ENCODE measurements at regions of chr2 and their contacts with region 1.

Region 1: DNA sequence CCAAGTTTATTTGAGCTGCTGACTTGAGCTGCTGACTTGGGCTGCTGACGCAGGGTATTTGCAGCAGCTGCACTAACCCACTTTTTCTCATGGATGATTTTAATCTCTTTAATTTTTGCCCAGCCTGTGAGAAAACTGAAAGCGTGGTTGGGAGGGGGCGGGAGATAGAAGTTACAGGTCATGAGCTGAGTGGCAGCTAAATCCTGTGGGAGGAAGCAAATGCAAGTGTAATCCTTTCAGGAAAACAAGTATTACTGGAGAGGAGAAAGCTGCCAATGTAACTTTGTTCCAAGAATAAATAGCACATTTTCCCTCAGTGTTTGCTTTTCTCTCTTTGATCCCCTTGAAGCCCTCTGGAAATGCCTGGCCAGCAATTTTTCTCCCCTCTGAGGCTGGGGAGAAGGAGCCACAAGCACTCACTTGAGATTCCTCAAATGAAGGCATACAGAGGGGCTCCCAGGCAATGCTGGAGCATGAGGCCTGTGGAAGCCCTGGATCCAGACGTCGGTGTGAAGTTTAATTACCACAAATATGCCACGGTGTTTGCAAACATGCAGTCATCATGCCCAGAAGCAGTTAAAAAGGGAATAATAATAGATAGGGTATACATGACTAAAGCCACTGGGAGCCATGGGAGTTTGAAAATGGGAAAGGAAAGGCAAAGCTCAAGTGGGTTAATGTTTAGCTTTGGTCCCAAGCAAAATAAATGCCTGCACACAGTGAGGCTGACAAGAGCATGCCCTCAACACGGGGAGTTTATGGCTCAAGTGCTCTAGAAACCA is 10.4 kb upstream of the EVA1A start:
- DNase-seq: peak; percentile 96
- ATAC-seq: peak; percentile 94
- H3K4me3 ChIP-seq: peak overlapping the region; percentile 39 to 54 (median 46)
- H3K27ac ChIP-seq: peak overlapping the region; percentile 95
- H3K4me1 ChIP-seq: peaks cover 75% of the 10 kb centered on the region
- H3K27me3 ChIP-seq: no peaks in the 10 kb centered on the region
- CTCF ChIP-seq: no peak
- EP300 ChIP-seq: peak in 1 of 2 experiments; percentile 95; a peak in 2 of 4 replicates
- POLR2A ChIP-seq: peak; percentile 49 to 82; a peak in 3 of 4 replicates
- RAD21 ChIP-seq: no peak; the same call in 1 of the 2 replicates

Region 2: DNA sequence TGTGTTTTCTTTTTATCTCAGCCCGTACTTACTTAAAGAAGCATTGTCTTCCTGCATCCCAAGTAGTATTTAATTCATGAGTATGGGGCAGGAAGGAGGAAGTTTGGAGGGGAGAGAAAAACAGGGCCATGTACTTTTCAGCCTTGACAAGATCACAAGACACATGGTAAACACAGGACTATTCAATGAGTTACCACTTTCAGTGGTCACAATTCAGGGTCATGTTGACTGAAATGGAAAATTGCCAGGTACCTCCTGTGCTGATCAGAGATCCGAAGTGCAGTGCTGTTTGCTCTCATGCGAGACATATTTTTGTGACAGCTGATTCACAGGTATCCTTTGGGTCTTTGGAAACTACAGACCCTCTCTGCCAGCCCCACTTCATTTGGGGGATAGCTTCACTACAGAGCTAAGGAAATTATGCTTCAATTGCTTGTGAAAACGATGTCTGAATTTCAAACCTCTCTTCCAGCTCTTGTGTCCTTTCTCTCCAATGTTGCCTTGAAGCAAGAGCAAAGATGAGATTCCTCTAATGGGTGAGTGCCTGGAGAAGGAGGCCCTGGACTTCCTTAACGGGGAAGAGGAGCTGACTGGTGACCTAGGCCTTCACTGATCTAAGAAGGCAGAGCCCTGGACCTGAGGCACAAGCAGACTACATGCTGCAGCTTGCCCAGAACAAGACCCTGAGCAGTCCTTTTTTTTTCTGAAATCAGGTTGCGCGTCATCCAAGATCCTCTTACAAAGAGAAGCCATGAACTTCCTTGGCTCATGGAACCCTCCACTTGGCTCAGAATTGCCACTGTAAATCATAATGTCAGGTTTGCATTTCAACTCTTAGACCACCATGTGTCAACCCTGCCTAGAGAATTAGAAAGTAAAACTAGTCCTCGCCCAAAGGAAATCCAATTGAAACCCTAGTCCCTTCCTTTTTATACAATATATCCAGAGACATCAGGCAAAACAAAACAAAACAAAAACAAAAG is 54.5 kb before region 1 on chr2:
- CTCF ChIA-PET with region 1: no interaction called
- POLR2A ChIA-PET with region 1: interaction called, 58 read pairs
- in situ Hi-C with region 1: loop called (anchors 5 kb)
- intact Hi-C with region 1: no loop called
- DNase-seq: peak; percentile 99
- ATAC-seq: peak; percentile 93
- H3K4me3 ChIP-seq: peak overlapping the region in 1 of 3 experiments; percentile 24; a peak in 1 of 6 replicates
- H3K27ac ChIP-seq: peak overlapping the region; percentile 92
- H3K4me1 ChIP-seq: peaks cover 84% of the 10 kb centered on the region
- H3K27me3 ChIP-seq: no peaks in the 10 kb centered on the region
- CTCF ChIP-seq: no peak
- EP300 ChIP-seq: peak; percentile 84 to 100; a peak in 3 of 4 replicates
- POLR2A ChIP-seq: peak; percentile 23 to 36; a peak in 1 of 4 replicates
- RAD21 ChIP-seq: no peak; the same call in 1 of the 2 replicates

Region 3: GRCh38 chr2:75548036-75548573 is 23.0 kb before region 1 on chr2:
- CTCF ChIA-PET with region 1: no interaction called
- POLR2A ChIA-PET with region 1: interaction called, 18 read pairs
- in situ Hi-C with region 1: no loop called
- intact Hi-C with region 1: loop called (anchors 1 kb)
- DNase-seq: no peak
- ATAC-seq: no peak
- H3K4me3 ChIP-seq: no peak overlapping the region
- H3K27ac ChIP-seq: no peak overlapping the region
- H3K4me1 ChIP-seq: peaks cover 97% of the 10 kb centered on the region
- H3K27me3 ChIP-seq: no peaks in the 10 kb centered on the region
- CTCF ChIP-seq: no peak
- EP300 ChIP-seq: no peak
- POLR2A ChIP-seq: 0 out of 4 replicates have a peak, but pooled peaks of 1 of the 2 experiments have one; percentile 6
- RAD21 ChIP-seq: no peak

Region 4: DNA sequence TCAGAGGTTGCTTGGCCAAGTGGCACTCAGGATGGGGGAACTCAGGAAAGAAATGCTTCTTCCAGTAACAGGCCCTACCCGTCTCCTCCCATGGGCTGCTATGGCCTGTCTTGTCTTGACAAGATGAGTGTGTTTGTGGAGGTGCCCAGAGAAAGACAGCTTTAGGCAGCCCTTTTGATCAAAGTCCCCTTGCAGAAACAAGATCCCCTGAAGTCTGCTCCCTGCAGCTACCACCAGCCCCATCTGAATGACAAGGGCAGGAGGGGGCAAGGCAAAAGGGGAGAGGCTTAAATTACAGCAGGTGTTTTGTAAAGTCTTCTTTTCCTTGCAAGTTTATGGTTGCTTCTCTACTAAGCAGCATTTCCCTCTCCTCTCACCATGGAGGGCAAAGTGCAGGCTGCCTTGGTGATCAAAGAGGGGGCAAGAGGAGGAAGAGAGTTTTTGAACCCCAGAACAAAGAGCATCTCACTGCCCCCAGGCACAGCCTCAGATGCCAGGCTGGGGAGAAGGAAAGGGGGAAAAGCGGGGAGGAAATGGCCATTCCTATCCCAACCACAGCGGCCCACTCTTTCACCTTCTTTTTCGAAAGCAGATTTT is 17.1 kb before region 1 on chr2:
- CTCF ChIA-PET with region 1: no interaction called
- POLR2A ChIA-PET with region 1: interaction called, 126 read pairs
- in situ Hi-C with region 1: no loop called
- intact Hi-C with region 1: no loop called
- DNase-seq: no peak
- ATAC-seq: no peak
- H3K4me3 ChIP-seq: 0 out of 6 replicates have a peak overlapping the region, but pooled peaks of 1 of the 3 experiments have one; percentile 4
- H3K27ac ChIP-seq: peak overlapping the region; percentile 27
- H3K4me1 ChIP-seq: peaks cover 100% of the 10 kb centered on the region
- H3K27me3 ChIP-seq: no peaks in the 10 kb centered on the region
- CTCF ChIP-seq: no peak
- EP300 ChIP-seq: 0 out of 4 replicates have a peak, but pooled peaks of 1 of the 2 experiments have one; percentile 30
- POLR2A ChIP-seq: no peak
- RAD21 ChIP-seq: no peak

Region 5: DNA sequence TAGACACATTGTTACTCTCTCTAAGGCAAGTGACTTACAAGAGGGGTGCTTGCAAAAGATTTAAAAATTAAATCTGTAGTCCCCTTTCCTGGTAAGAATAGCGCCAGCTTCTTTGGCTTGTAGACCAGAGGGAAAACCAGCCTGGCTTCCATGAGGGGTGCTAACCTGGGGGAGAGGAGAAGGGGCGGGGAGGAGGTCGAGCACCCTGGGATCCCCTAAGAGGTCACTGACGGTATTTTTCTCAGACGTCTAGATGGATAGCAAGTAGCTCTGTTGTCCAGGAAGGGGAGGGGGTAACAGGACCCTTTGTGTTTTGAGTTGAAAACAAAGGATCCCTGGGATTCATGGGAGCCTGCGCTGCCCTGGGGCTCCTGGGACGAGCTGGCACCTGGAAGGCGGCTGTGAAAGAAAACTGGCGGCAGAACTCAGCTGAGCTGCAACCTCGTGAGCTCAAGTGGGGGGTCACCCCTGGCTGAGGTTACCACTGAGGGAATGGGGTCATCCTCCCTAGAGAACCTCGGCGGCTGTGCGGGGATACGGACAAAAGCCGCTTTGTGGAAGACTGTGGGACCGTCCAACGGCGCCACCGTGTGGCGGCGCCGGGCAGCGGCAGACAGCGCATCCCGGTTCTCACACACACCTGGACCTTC is 37.7 kb after region 1 on chr2:
- CTCF ChIA-PET with region 1: no interaction called
- POLR2A ChIA-PET with region 1: interaction called, 17 read pairs
- in situ Hi-C with region 1: loop called (anchors 5 kb)
- intact Hi-C with region 1: loop called (anchors 1 kb)
- DNase-seq: peak; percentile 79
- ATAC-seq: peak; percentile 95
- H3K4me3 ChIP-seq: peak overlapping the region; percentile 28 to 65 (median 28); a peak in 5 of 6 replicates
- H3K27ac ChIP-seq: peak overlapping the region; percentile 8
- H3K4me1 ChIP-seq: peaks cover 66% of the 10 kb centered on the region
- H3K27me3 ChIP-seq: no peaks in the 10 kb centered on the region; a peak in 1 of 5 replicates
- CTCF ChIP-seq: peak; percentile 99
- EP300 ChIP-seq: peak in 1 of 2 experiments; percentile 33; a peak in 1 of 4 replicates
- POLR2A ChIP-seq: no peak
- RAD21 ChIP-seq: peak; percentile 99